A673 (cell line): ENCODE measurements at regions of chr5 and their contacts with region 1.

Region 1: GRCh38 chr5:175344331-175345195 is 99.4 kb downstream of the DRD1 start:
- DNase-seq: peak; percentile 64
- H3K4me3 ChIP-seq: no peak overlapping the region
- H3K27ac ChIP-seq: no peak overlapping the region
- H3K4me1 ChIP-seq: peaks cover 8% of the 10 kb centered on the region
- H3K27me3 ChIP-seq: no peaks in the 10 kb centered on the region
- CTCF ChIP-seq: no peak

Region 2: DNA sequence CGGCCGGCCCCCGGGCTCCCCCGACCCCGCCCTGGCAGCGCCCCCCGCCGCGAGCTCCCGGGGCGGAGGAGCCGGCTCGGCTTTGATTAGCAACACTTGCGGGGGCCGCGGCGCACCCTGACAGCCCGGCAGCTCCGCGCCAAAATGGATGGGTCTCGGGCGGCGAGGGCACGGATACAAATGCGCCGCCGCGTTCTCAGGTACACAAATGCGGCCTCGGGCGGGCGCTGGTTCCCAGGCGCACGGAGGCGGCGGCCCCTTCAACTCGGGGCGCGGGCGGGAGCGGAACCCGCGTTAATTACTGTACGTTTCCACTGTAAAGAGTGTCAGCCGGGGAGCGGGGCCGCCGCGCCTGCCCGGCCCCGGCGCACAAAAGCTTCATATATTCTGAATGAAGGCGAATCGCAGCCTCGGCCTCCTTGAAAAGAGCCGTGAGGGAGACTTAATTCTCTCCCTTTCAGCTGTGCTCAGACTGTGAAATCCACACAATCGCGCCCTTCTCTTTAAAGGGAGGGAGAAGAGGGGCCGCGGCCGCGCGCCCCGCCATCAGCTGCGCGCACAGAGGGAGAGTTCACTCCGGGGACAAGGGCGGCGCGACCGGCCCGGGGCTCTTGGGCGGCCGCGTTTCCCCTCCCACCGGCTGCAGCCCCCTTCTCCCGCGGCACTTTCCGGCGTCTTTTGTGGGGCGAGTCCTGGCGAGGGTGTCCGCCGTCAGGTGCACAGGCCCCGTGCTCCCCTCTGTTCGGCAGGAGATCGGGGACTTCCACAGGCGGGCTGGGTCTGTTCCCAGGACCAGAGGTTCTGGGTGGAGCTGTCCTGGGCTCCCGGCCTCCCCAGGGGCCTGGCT is 593.2 kb before region 1 on chr5:
- CTCF ChIA-PET with region 1: no interaction called
- POLR2A ChIA-PET with region 1: no interaction called
- intact Hi-C with region 1: no loop called
- DNase-seq: peak; percentile 20
- H3K4me3 ChIP-seq: peak overlapping the region; percentile 39
- H3K27ac ChIP-seq: no peak overlapping the region
- H3K4me1 ChIP-seq: no peaks in the 10 kb centered on the region
- H3K27me3 ChIP-seq: peaks cover 46% of the 10 kb centered on the region
- CTCF ChIP-seq: no peak

Region 3: DNA sequence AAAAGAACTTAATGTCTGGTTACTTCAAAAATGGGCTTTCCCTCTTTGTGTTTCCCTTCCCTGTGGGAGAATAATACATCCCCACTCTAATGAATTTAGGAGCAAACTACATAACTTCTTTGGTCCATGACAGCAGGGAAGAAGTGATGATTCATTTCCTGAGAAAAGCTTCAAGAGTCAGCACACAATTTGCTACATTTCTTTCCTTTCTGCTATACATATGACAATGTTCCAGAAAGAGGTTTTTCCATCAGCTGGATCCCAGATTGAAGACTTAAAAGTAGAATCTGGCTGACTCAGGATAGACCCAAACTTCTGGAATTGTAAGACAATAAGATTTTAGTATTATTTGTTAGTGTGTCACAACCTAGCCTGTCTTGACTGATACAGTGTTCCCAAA is 26.7 kb before region 1 on chr5:
- CTCF ChIA-PET with region 1: no interaction called
- POLR2A ChIA-PET with region 1: no interaction called
- intact Hi-C with region 1: no loop called
- DNase-seq: peak; percentile 10
- H3K4me3 ChIP-seq: no peak overlapping the region
- H3K27ac ChIP-seq: no peak overlapping the region
- H3K4me1 ChIP-seq: no peaks in the 10 kb centered on the region
- H3K27me3 ChIP-seq: peaks cover 13% of the 10 kb centered on the region
- CTCF ChIP-seq: no peak

Region 4: GRCh38 chr5:175378444-175379028 is 34.0 kb after region 1 on chr5:
- CTCF ChIA-PET with region 1: no interaction called
- POLR2A ChIA-PET with region 1: no interaction called
- intact Hi-C with region 1: loop called (anchors 2 kb)
- DNase-seq: peak; percentile 96
- H3K4me3 ChIP-seq: no peak overlapping the region
- H3K27ac ChIP-seq: no peak overlapping the region
- H3K4me1 ChIP-seq: peaks cover 34% of the 10 kb centered on the region
- H3K27me3 ChIP-seq: peaks cover 15% of the 10 kb centered on the region
- CTCF ChIP-seq: no peak